H1 (cell line): ENCODE measurements at regions of chr7 and their contacts with region 1.

Region 1: GRCh38 chr7:29921404-29922010 is 68.1 kb downstream of the SCRN1 start:
- DNase-seq: peak; percentile 21 to 67
- H3K4me3 ChIP-seq: no peak overlapping the region
- H3K27ac ChIP-seq: no peak overlapping the region
- H3K4me1 ChIP-seq: no peaks in the 10 kb centered on the region
- H3K27me3 ChIP-seq: no peaks in the 10 kb centered on the region
- CTCF ChIP-seq: peak; percentile 61 to 99 (median 89)
- EP300 ChIP-seq: no peak
- POLR2A ChIP-seq: peak in 1 of 2 experiments; percentile 24; a peak in 1 of 3 replicates
- RAD21 ChIP-seq: peak; percentile 95 to 96

Region 2: DNA sequence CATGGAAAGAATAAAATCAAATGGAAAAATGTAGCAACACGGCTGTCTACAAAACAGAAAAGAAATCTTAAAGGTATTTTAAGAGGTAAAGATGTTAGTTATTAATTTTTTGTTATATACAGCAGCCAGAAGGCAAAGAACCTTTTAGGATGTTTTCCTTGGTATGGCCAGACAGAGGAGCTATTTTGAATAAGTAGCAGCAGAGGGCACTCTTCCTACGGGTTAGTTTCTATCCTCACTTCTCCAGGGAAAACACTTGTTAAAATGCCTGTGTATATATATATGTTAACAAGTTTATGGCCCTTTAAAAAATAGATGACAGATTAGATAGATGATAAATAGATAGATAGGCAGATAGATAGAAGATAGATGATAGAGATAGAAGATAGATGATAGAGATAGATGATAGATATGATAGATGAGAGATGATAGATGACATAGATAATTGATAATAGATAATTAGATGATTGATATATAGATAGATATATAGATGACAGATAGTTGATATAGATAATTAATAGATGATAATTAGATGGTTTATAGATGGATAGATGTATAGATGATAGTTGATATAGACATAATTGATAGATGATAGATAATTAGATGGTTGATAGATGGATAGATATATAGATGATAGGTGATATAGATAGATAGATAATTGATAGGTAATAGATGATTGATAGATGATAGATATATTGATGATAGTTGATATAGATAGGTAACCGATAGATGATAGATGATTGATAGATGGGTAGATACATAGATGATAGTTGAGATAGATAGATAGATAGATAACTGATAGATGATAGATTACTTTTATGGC is 173.0 kb before region 1 on chr7:
- CTCF ChIA-PET with region 1: interaction called, 23 read pairs
- POLR2A ChIA-PET with region 1: no interaction called
- DNase-seq: no peak
- H3K4me3 ChIP-seq: no peak overlapping the region
- H3K27ac ChIP-seq: no peak overlapping the region
- H3K4me1 ChIP-seq: no peaks in the 10 kb centered on the region
- H3K27me3 ChIP-seq: no peaks in the 10 kb centered on the region
- CTCF ChIP-seq: peak in 2 of 3 experiments; percentile 40 to 51; a peak in 2 of 4 replicates
- EP300 ChIP-seq: no peak
- POLR2A ChIP-seq: no peak
- RAD21 ChIP-seq: peak; percentile 60 to 70

Region 3: DNA sequence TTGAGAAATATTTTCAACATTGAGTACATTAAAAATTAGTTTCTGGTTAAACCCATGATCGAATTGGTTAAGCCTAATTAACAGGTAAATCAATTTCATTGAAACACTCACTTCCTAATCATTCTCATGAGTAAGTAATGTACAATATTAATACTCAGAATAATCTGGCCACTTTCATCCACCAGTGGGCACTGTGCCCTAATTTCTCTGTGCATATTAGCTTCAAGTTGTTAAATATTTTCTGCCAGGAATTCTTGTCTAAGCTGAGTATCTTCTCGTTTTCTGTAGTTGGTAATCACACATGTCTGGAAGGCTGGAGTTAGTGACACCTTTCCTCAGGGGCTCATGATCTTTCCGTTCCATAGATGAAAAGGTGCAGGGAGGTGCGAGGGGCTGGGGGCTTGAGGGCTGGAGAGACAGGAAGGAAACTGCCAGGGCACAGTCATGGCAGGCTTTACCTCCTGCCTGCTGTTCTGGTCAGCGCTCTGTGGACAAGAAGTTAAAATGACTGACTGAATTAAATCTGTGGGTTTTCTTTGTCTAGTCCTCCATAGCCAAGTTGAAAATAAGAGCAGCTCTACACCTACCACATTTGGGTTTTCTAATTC is 43.3 kb before region 1 on chr7:
- CTCF ChIA-PET with region 1: interaction called, 18 read pairs
- POLR2A ChIA-PET with region 1: interaction called, 3 read pairs
- DNase-seq: no peak
- H3K4me3 ChIP-seq: no peak overlapping the region
- H3K27ac ChIP-seq: no peak overlapping the region
- H3K4me1 ChIP-seq: peaks cover 2 to 7% (median 5%) of the 10 kb centered on the region in 4 experiments
- H3K27me3 ChIP-seq: no peaks in the 10 kb centered on the region
- CTCF ChIP-seq: peak in 1 of 3 experiments; percentile 30; a peak in 1 of 4 replicates
- EP300 ChIP-seq: no peak
- POLR2A ChIP-seq: no peak
- RAD21 ChIP-seq: peak; percentile 23 to 30; a peak in 3 of 4 replicates

Region 4: GRCh38 chr7:29893351-29894232 is 27.9 kb before region 1 on chr7:
- CTCF ChIA-PET with region 1: interaction called, 11 read pairs
- POLR2A ChIA-PET with region 1: no interaction called
- DNase-seq: no peak
- H3K4me3 ChIP-seq: no peak overlapping the region
- H3K27ac ChIP-seq: no peak overlapping the region
- H3K4me1 ChIP-seq: no peaks in the 10 kb centered on the region; a peak in 1 of 7 replicates
- H3K27me3 ChIP-seq: no peaks in the 10 kb centered on the region
- CTCF ChIP-seq: no peak
- EP300 ChIP-seq: no peak
- POLR2A ChIP-seq: no peak
- RAD21 ChIP-seq: no peak

Region 5: GRCh38 chr7:29946428-29947186 is 25.1 kb after region 1 on chr7:
- CTCF ChIA-PET with region 1: interaction called, 12 read pairs
- POLR2A ChIA-PET with region 1: no interaction called
- DNase-seq: peak in 1 of 2 experiments; percentile 54
- H3K4me3 ChIP-seq: no peak overlapping the region
- H3K27ac ChIP-seq: no peak overlapping the region
- H3K4me1 ChIP-seq: no peaks in the 10 kb centered on the region
- H3K27me3 ChIP-seq: no peaks in the 10 kb centered on the region
- CTCF ChIP-seq: peak; percentile 71 to 91 (median 77)
- EP300 ChIP-seq: no peak
- POLR2A ChIP-seq: no peak
- RAD21 ChIP-seq: peak; percentile 77 to 83

Region 6: GRCh38 chr7:30284298-30285066 is 363.0 kb after region 1 on chr7 and contains the start of gene ZNRF2:
- CTCF ChIA-PET with region 1: no interaction called
- POLR2A ChIA-PET with region 1: no interaction called
- DNase-seq: peak; percentile 96 to 98
- H3K4me3 ChIP-seq: peak within 1 kb of the TSS; percentile 78 to 97 (median 86)
- H3K27ac ChIP-seq: peak within 1 kb of the TSS; percentile 77; the same call in 1 of the 2 replicates
- H3K4me1 ChIP-seq: peaks cover 0 to 5% (median 3%) of the 10 kb centered on the region in 4 experiments; a peak in 4 of 7 replicates
- H3K27me3 ChIP-seq: no peaks in the 10 kb centered on the region
- CTCF ChIP-seq: peak in 2 of 3 experiments; percentile 36 to 40; a peak in 3 of 4 replicates
- EP300 ChIP-seq: no peak
- POLR2A ChIP-seq: peak in 1 of 2 experiments; percentile 39; a peak in 1 of 3 replicates
- RAD21 ChIP-seq: peak in 1 of 2 experiments; percentile 24; a peak in 1 of 4 replicates
- total RNA-seq, gene ZNRF2: 16.2 and 17.7 TPM in 2 replicates